OCI-LY7 (cell line): ENCODE measurements at regions of chr11 and their contacts with region 1.

Region 1: GRCh38 chr11:2382936-2383851 is 6.1 kb downstream of the CD81 start:
- DNase-seq: peak; percentile 51
- H3K4me3 ChIP-seq: peak overlapping the region; percentile 99
- H3K27ac ChIP-seq: peak overlapping the region; percentile 89
- H3K4me1 ChIP-seq: peaks cover 79% of the 10 kb centered on the region
- CTCF ChIP-seq: no peak

Region 2: DNA sequence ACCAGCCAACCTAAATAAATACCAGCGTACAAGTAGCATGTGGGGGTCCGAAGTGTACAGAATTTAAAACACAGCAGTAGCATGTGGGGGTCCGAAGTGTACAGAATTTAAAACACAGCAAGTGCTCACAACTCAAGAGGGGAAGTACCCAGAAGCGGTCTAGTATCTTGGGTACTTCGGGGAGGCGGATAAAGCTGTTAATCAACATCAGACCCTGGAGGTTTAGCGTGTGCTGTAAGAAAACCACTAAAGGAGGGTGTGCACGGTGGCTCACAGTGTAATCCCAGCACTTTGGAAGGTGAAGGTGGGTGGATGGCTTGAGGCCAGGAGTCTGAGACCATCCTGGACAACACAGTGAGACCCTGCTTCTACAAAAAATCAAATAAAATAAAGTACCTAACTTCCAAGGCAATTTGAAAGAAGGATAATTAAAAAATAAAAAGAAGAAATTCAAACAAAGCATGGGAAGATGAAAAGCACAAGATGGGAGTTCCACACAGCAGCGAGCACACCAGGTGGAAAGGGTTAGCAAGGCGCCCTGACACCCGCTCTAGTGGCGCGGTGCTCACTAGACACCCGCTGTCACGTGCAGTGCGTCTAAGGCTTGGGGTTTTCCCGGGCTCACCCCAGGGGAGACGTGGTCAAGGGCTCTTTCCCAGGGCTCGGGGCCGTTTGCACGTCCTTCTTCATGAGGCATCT is 861.7 kb before region 1 on chr11:
- CTCF ChIA-PET with region 1: no interaction called
- POLR2A ChIA-PET with region 1: no interaction called
- intact Hi-C with region 1: loop called (anchors 5 kb)
- DNase-seq: peak; percentile 71
- H3K4me3 ChIP-seq: peak overlapping the region; percentile 52
- H3K27ac ChIP-seq: peak overlapping the region; percentile 88
- H3K4me1 ChIP-seq: peaks cover 53% of the 10 kb centered on the region
- CTCF ChIP-seq: 0 out of 2 replicates have a peak, but pooled peaks have one; percentile 9

Region 3: DNA sequence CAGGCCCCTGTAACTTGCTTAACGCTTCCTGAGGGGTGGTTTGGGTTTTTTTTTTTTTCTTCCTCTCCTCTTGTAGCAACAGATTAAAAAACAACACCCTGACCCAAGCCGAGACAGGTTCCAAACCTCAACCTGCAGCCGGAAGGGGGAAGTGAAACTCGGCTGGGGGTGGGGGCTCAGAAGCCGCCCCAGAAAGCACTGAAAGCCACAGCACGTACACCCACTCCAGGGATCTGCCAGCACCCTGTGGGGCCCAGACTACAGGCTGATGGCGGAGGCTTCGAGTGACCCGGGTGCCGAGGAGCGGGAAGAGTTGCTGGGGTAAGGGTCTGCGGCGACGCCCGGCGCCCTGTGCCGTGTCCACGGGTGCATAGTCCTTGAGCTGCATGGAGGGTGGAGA is 530.3 kb before region 1 on chr11 and contains the start of gene LSP1:
- CTCF ChIA-PET with region 1: no interaction called
- POLR2A ChIA-PET with region 1: no interaction called
- intact Hi-C with region 1: loop called (anchors 5 kb)
- DNase-seq: peak; percentile 96
- H3K4me3 ChIP-seq: peak within 1 kb of the TSS; percentile 93
- H3K27ac ChIP-seq: peak within 1 kb of the TSS; percentile 96
- H3K4me1 ChIP-seq: peaks cover 53% of the 10 kb centered on the region
- CTCF ChIP-seq: no peak
- total RNA-seq, gene LSP1: 195 and 232 TPM in 2 replicates

Region 4: GRCh38 chr11:2393941-2394817 is 11.0 kb after region 1 on chr11:
- CTCF ChIA-PET with region 1: interaction called, 4 read pairs
- POLR2A ChIA-PET with region 1: interaction called, 7 read pairs
- intact Hi-C with region 1: loop called (anchors 1 kb)
- DNase-seq: peak; percentile 78
- H3K4me3 ChIP-seq: peak overlapping the region; percentile 55
- H3K27ac ChIP-seq: peak overlapping the region; percentile 99
- H3K4me1 ChIP-seq: peaks cover 68% of the 10 kb centered on the region
- CTCF ChIP-seq: peak; percentile 62

Region 5: DNA sequence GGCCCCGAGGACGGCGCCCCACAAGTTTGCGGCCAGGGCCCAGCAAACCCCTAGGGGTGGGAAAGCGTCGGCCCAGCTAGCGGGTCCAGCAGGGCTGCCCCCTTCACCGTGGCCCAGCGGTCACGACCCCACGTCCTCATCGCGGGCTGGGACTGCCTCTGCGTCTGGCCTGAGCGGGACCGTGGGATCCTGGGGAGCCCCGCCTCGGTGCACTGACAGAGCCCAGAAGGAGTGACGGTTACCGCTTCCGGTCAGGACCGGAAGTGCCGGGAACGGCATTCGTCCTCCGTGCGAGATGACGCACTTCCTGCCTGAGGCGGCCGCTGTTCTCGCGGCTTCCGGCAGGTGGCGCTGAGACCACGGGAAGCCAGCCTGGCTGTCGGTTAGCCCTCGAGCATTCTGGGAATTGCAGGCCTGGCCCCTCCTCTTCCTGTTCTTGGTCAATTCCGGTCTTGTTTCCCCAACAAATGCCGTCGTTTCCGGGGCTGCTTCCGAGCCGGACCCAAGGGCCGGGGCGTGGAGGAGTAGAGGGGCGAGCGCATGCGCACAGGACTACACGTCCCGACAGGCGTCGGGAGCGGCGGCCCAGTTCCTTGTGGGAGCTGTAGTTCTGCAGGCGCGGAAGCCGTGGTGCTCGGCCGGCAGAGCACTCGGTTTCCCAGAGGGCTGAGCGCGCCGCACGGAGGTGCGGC is 17.0 kb after region 1 on chr11 and contains the start of gene TSSC4:
- CTCF ChIA-PET with region 1: interaction called, 4 read pairs
- POLR2A ChIA-PET with region 1: interaction called, 13 read pairs
- intact Hi-C with region 1: loop called (anchors 2 kb)
- DNase-seq: peak; percentile 100
- H3K4me3 ChIP-seq: peak within 1 kb of the TSS; percentile 99
- H3K27ac ChIP-seq: peak within 1 kb of the TSS; percentile 80
- H3K4me1 ChIP-seq: peaks cover 23% of the 10 kb centered on the region
- CTCF ChIP-seq: peak; percentile 89
- total RNA-seq, gene TSSC4: 40.4 and 43.5 TPM in 2 replicates

Region 6: DNA sequence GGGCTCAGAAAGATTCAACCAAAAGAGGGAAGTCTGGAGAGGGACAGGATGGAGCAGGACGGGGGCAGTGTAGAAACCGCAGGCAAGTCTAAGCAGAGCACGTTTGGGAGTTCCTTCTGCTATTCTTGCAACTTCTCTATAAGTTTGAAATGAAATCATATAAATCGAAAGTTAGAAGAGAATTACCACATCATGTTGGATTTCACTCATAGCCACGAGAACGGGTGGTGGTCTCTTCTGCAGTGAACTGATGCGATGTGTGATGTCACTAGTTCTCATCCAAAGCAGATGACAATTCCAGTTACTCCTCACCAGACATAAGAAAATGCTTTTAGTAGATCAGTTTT is 97.7 kb after region 1 on chr11:
- CTCF ChIA-PET with region 1: no interaction called
- POLR2A ChIA-PET with region 1: no interaction called
- intact Hi-C with region 1: no loop called
- DNase-seq: no peak
- H3K4me3 ChIP-seq: no peak overlapping the region
- H3K27ac ChIP-seq: no peak overlapping the region
- H3K4me1 ChIP-seq: no peaks in the 10 kb centered on the region
- CTCF ChIP-seq: no peak

Region 7: DNA sequence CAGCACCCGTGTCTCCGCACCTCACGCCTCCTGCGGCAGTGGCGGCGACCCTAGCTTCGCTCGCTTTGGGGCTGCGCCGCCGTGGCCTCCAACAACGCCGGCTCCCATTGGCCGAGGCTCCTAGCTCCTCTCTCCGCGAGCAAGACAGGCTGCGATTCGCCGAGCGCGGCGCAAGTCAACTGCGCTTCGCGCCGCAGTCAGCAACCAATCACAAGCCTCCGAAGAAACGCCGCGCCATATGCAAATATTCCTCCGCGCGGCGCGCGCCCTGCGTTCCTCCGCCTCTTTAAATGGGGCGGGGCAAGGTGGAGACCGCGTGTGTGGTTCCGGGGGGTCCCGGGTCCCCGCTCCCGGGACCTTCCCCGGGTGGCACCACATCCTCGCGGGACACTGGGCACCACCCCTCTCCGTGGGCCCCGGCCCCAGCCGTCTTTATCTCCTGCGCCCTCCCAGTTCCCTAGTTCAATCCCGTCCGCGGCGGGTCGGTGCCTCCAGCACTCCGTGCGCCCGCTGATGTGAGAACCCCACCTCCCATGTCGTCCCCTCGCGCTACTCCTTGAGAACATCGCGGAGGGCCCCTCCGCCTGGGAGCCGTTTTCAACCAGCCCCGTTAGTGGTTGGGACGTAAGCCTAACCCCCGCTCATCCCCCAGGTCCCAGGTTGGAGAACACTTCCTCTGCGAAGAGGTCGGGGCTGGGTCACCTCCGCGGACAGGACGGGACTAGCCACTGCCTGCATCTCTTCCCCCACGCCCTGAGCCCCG is 609.2 kb after region 1 on chr11 and contains the start of gene NAP1L4:
- CTCF ChIA-PET with region 1: no interaction called
- POLR2A ChIA-PET with region 1: no interaction called
- intact Hi-C with region 1: loop called (anchors 5 kb)
- DNase-seq: peak; percentile 98
- H3K4me3 ChIP-seq: peak within 1 kb of the TSS; percentile 97
- H3K27ac ChIP-seq: peak within 1 kb of the TSS; percentile 69
- H3K4me1 ChIP-seq: peaks cover 18% of the 10 kb centered on the region
- CTCF ChIP-seq: no peak
- total RNA-seq, gene NAP1L4: 152 and 247 TPM in 2 replicates

Region 8: DNA sequence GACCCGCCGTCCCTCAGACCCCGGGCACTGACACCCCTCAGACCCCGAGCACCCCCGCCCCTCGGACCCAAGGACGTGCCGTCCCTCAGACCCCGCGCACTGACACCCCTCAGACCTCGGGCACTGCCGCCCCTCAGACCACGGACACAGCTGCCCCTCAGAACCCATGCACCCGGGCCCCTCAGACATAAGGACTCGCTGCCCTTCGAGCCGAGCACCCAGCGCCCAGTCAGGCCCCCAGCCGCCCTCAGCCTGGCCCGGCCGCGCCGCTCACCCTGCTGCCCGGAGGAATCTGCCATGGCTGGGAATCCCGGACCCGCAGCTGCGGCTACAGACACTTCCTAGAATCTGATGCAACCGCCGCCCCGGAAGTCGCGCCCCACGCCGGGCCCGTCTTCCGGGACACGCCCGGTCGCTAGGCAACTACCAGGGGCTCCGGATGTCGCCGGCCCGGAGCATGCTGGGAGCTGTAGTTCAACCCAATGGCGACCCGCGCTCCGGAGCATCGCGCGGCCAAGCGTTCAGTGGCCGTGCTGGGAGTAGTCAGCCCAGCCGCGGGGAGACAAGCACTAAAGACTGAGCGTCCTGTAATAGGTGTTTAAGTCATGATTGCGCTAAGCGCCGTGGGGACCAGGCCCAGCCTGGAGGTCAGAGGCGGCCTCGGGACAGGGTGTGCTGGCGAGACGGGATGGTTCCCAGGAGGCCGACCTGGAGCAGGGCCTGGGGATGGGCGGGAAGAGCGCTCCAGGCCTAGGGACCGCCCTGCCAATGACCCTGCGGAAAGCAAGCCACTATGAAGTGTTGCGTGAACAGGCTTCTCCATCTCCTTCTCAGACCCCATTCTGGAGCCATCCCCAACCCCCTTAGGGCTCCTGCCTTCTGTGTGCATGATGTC is 674.1 kb after region 1 on chr11 and contains the start of gene CARS1:
- CTCF ChIA-PET with region 1: no interaction called
- POLR2A ChIA-PET with region 1: no interaction called
- intact Hi-C with region 1: loop called (anchors 5 kb)
- DNase-seq: peak; percentile 94
- H3K4me3 ChIP-seq: peak within 1 kb of the TSS; percentile 95
- H3K27ac ChIP-seq: peak within 1 kb of the TSS; percentile 49
- H3K4me1 ChIP-seq: peaks cover 14% of the 10 kb centered on the region
- CTCF ChIP-seq: no peak
- total RNA-seq, gene CARS1: 58.3 and 62.4 TPM in 2 replicates